ENCODE measurements at regions of chr14 and their contacts with region 1.

Region 1: DNA sequence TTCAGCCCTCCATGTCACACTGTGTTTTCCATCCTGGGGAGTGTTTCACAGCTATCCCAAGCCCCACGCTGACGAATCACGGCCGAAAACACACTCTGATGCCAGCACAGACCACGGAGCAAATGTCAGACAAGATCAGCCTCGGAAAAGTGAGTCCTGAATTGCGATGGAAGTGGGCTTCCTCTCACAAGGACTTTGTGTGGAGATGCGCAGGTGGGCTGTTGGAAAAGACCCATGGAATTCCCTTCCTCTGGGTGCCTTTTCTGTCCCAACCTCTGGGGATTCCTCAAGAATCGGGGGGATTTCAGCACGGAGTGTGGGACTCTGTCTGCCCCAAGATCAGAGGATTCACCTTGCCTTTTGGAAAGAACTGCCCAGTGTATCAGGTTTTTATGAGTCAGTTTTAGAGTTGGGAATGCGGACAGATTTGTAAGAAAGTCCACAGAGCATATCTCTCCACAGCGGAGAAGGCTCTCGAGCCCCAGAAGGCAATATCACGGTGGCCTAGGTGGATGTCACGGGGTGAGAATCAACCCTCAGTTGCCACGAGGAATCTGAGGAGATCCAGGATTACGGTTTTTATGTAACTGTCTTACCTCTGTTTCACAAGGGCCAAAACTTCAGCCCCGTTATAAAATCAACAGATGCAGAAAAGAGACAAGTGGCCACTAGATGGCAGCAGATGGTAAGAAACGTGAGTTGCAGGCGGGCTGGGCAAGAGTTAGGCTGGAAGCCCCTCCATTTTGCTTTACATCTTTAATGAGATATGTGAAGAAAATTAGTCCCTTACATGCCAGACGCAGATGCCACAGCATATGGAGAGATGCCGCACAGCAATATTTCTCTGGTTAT is 201.9 kb downstream of the DAD1 start:
- DNase-seq: peak; percentile 93
- H3K4me3 ChIP-seq: peak overlapping the region; percentile 33
- H3K27ac ChIP-seq: peak overlapping the region; percentile 49
- H3K4me1 ChIP-seq: peaks cover 94% of the 10 kb centered on the region
- CTCF ChIP-seq: peak; percentile 94

Region 2: DNA sequence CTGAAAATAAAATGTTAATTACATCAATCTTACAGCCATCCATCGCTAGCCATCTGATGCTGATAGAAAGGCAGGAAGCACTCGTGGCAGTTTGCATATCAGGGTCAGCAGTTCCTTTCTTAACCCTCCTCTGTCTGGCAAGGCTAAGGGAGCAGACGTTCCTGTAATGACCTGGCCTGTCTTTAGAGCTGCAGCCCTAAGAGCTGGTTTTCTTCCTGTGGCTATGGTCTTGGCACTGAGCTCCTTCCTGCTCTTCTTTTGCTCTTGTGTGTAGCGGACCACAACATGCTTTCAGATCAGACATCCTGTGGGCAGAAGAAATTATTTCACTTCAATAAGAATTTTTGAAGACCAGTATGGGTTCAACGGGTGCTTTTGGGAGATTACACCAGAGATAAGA is 31.5 kb after region 1 on chr14:
- CTCF ChIA-PET with region 1: interaction called, 7 read pairs
- POLR2A ChIA-PET with region 1: interaction called, 7 read pairs
- intact Hi-C with region 1: loop called (anchors 2 kb)
- DNase-seq: peak; percentile 74
- H3K4me3 ChIP-seq: peak overlapping the region; percentile 26
- H3K27ac ChIP-seq: peak overlapping the region; percentile 78
- H3K4me1 ChIP-seq: peaks cover 61% of the 10 kb centered on the region
- CTCF ChIP-seq: no peak

Region 3: GRCh38 chr14:22472935-22473854 is 86.0 kb after region 1 on chr14:
- CTCF ChIA-PET with region 1: interaction called, 80 read pairs
- POLR2A ChIA-PET with region 1: interaction called, 55 read pairs
- intact Hi-C with region 1: loop called (anchors 1 kb)
- DNase-seq: peak; percentile 89
- H3K4me3 ChIP-seq: peak overlapping the region; percentile 37
- H3K27ac ChIP-seq: peak overlapping the region; percentile 81
- H3K4me1 ChIP-seq: peaks cover 98% of the 10 kb centered on the region
- CTCF ChIP-seq: peak; percentile 96

Region 4: GRCh38 chr14:22653012-22653621 is 266.0 kb after region 1 on chr14:
- CTCF ChIA-PET with region 1: no interaction called
- POLR2A ChIA-PET with region 1: no interaction called
- intact Hi-C with region 1: loop called (anchors 1 kb)
- DNase-seq: peak; percentile 72
- H3K4me3 ChIP-seq: no peak overlapping the region
- H3K27ac ChIP-seq: no peak overlapping the region
- H3K4me1 ChIP-seq: no peaks in the 10 kb centered on the region
- CTCF ChIP-seq: peak; percentile 84

Region 5: GRCh38 chr14:22872033-22872832 is 485.1 kb after region 1 on chr14:
- CTCF ChIA-PET with region 1: no interaction called
- POLR2A ChIA-PET with region 1: no interaction called
- intact Hi-C with region 1: loop called (anchors 5 kb)
- DNase-seq: peak; percentile 80
- H3K4me3 ChIP-seq: peak overlapping the region; percentile 86
- H3K27ac ChIP-seq: peak overlapping the region; percentile 93
- H3K4me1 ChIP-seq: peaks cover 31% of the 10 kb centered on the region
- CTCF ChIP-seq: peak; percentile 98

Measured in OCI-LY7 (cell line).